Activated CD4-positive, alpha-beta memory T cell treated with anti-CD3 and anti-CD28 coated beads for 36 hours (primary cell): ENCODE measurements at regions of chr5 and their contacts with region 1.

Region 1: DNA sequence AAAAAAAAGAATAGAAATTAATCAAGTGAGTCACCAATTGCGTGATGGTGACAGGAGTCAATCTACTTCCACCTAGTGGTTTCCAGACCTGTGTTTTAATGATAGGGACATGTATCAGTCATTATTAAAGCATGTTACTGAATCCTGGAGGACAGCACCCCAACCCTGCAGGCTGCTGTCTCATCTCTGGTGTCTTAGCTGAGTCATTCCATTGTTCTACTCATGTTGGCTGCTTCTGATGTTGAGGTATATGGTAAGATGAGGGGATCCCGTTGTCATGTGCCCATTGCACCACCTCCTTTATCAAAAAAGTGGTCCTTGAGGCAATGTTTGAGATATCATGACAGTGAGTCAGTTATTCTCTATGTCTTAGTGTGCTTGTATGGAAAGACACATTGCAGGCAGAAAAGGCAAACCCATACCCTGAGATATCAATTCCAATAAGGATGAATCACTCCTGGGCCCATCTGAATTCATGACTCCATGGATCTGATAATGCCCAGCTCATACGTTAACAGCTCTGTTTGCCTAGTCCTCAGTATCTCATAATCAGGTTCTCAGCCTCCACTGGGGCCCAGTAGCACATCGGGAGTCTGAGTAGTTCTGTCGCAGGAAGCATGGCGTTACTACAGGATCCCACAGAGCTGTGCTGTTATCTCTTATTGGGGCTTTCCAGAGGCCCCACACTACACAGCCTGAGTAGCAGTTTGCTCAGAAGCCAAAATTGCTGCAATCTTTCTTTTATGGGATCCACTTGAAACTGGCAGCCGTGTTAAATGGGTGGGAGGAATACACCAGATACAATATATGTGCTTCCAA is 31.2 kb downstream of the HMGCS1 start:
- DNase-seq: peak; percentile 62
- H3K4me3 Mint-ChIP-seq: no peak overlapping the region
- H3K27ac Mint-ChIP-seq: no peak overlapping the region
- H3K4me1 Mint-ChIP-seq: peaks cover 21% of the 10 kb centered on the region
- H3K27me3 Mint-ChIP-seq: no peaks in the 10 kb centered on the region

Region 2: GRCh38 chr5:43244823-43245565 is 37.1 kb before region 1 on chr5:
- CTCF ChIA-PET with region 1: no interaction called
- POLR2A ChIA-PET with region 1: no interaction called
- intact Hi-C with region 1: loop called (anchors 5 kb)
- DNase-seq: no peak
- H3K4me3 Mint-ChIP-seq: no peak overlapping the region
- H3K27ac Mint-ChIP-seq: no peak overlapping the region
- H3K4me1 Mint-ChIP-seq: peaks cover 11% of the 10 kb centered on the region
- H3K27me3 Mint-ChIP-seq: peaks cover 27% of the 10 kb centered on the region

Region 3: GRCh38 chr5:43305948-43306565 is 24.0 kb after region 1 on chr5:
- CTCF ChIA-PET with region 1: no interaction called
- POLR2A ChIA-PET with region 1: no interaction called
- intact Hi-C with region 1: loop called (anchors 1 kb)
- DNase-seq: no peak
- H3K4me3 Mint-ChIP-seq: peak overlapping the region; percentile 2
- H3K27ac Mint-ChIP-seq: peak overlapping the region; percentile 78
- H3K4me1 Mint-ChIP-seq: peaks cover 84% of the 10 kb centered on the region
- H3K27me3 Mint-ChIP-seq: no peaks in the 10 kb centered on the region